ENCODE measurements at regions of chrX and their contacts with region 1.

Region 1: GRCh38 chrX:63754860-63755582 is 30.0 kb downstream of the ARHGEF9 start:
- DNase-seq: peak; percentile 90
- H3K4me3 Mint-ChIP-seq: peak overlapping the region; percentile 90
- H3K27ac Mint-ChIP-seq: peak overlapping the region; percentile 96
- H3K4me1 Mint-ChIP-seq: peaks cover 29% of the 10 kb centered on the region
- H3K27me3 Mint-ChIP-seq: no peaks in the 10 kb centered on the region

Region 2: GRCh38 chrX:63350941-63351616 is 403.9 kb before region 1 on chrX and contains the start of gene SPIN4:
- CTCF ChIA-PET with region 1: no interaction called
- intact Hi-C with region 1: loop called (anchors 2 kb)
- DNase-seq: peak; percentile 68
- H3K4me3 Mint-ChIP-seq: peak within 1 kb of the TSS; percentile 79
- H3K27ac Mint-ChIP-seq: peak within 1 kb of the TSS; percentile 72
- H3K4me1 Mint-ChIP-seq: peaks cover 13% of the 10 kb centered on the region
- H3K27me3 Mint-ChIP-seq: no peaks in the 10 kb centered on the region
- total RNA-seq, gene SPIN4: 3.1 to 3.7 TPM

Measured in activated naive CD4-positive, alpha-beta T cell treated with anti-CD3 and anti-CD28 coated beads for 36 hours (primary cell).